Mammary epithelial cell (primary cell): ENCODE measurements at regions of chr18 and their contacts with region 1.

Region 1: GRCh38 chr18:7789856-7790552 is 222.9 kb downstream of the PTPRM start:
- DNase-seq: peak; percentile 37
- H3K4me3 ChIP-seq: no peak overlapping the region
- H3K27ac ChIP-seq: no peak overlapping the region
- H3K4me1 ChIP-seq: no peaks in the 10 kb centered on the region
- H3K27me3 ChIP-seq: no peaks in the 10 kb centered on the region
- CTCF ChIP-seq: peak; percentile 50 to 68

Region 2: GRCh38 chr18:7720395-7720794 is 69.6 kb before region 1 on chr18:
- CTCF ChIA-PET with region 1: no interaction called
- dilution Hi-C with region 1: no loop called
- in situ Hi-C with region 1: no loop called
- intact Hi-C with region 1: no loop called
- DNase-seq: no peak
- H3K4me3 ChIP-seq: no peak overlapping the region
- H3K27ac ChIP-seq: no peak overlapping the region
- H3K4me1 ChIP-seq: no peaks in the 10 kb centered on the region
- H3K27me3 ChIP-seq: no peaks in the 10 kb centered on the region
- CTCF ChIP-seq: no peak

Region 3: DNA sequence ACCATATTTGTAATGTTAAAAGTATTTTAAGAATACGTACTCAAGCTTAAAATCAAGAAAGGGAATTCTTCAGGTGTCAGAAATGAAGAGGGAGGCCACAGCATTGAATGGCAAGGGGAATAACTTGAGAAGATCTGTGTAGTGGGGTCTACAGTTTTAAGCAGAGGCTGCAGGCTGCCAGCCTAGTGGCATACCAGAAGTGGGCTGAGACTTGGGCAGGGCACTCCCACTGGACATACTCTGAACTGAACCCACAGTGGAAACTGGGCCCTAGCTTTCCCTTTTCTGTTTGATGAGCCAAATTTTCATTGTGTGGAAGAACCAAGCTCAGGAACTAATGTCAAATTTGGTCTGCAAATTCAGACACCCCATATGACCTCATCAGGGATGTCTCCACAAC is 15.9 kb after region 1 on chr18:
- CTCF ChIA-PET with region 1: no interaction called
- dilution Hi-C with region 1: no loop called
- in situ Hi-C with region 1: no loop called
- intact Hi-C with region 1: no loop called
- DNase-seq: no peak
- H3K4me3 ChIP-seq: no peak overlapping the region
- H3K27ac ChIP-seq: no peak overlapping the region
- H3K4me1 ChIP-seq: no peaks in the 10 kb centered on the region
- H3K27me3 ChIP-seq: no peaks in the 10 kb centered on the region
- CTCF ChIP-seq: no peak

Region 4: GRCh38 chr18:7872569-7872968 is 82.6 kb after region 1 on chr18:
- CTCF ChIA-PET with region 1: no interaction called
- dilution Hi-C with region 1: no loop called
- in situ Hi-C with region 1: no loop called
- intact Hi-C with region 1: loop called (anchors 2 kb)
- DNase-seq: peak; percentile 67
- H3K4me3 ChIP-seq: no peak overlapping the region
- H3K27ac ChIP-seq: peak overlapping the region; percentile 91
- H3K4me1 ChIP-seq: peaks cover 26% of the 10 kb centered on the region
- H3K27me3 ChIP-seq: no peaks in the 10 kb centered on the region
- CTCF ChIP-seq: peak; percentile 31 to 60

Region 5: GRCh38 chr18:7885865-7886264 is 95.9 kb after region 1 on chr18:
- CTCF ChIA-PET with region 1: no interaction called
- dilution Hi-C with region 1: no loop called
- in situ Hi-C with region 1: no loop called
- intact Hi-C with region 1: no loop called
- DNase-seq: no peak
- H3K4me3 ChIP-seq: no peak overlapping the region
- H3K27ac ChIP-seq: no peak overlapping the region
- H3K4me1 ChIP-seq: no peaks in the 10 kb centered on the region
- H3K27me3 ChIP-seq: no peaks in the 10 kb centered on the region
- CTCF ChIP-seq: no peak

Region 6: DNA sequence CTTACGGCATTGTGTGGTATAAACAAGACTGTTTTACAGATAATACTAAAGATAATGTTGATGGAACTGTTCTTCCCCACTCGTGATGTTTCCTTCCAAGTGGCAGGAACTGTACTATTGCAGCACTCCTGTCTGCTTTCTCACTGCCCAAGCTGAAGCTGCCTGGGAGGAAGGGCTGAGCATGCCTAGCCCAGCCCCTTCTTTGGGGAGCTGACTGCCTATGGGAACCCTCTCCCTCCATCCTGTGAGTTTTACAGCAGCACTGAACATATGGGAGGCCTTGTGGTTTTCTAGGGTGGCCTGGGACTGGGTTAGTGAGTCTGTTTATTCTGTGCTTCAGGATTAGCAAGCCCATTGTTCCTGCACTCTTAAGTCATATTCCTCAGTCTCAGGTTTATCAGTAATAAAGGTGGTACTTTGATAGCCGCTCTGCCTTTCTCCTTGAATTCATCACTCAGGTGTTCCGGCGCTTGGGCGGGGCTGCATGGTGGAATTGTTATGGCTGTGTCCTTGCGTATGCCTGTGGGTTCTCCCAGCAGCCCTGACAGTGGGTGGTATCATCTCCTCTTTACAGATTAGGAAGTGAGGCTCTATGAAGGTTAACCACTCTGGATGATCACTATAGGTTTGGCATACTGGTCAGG is 156.9 kb after region 1 on chr18:
- CTCF ChIA-PET with region 1: interaction called, 3 read pairs
- dilution Hi-C with region 1: no loop called
- in situ Hi-C with region 1: loop called in 1 of 2 experiments (anchors 25 kb)
- intact Hi-C with region 1: no loop called
- DNase-seq: peak; percentile 71
- H3K4me3 ChIP-seq: peak overlapping the region; percentile 31 to 57 (median 34)
- H3K27ac ChIP-seq: peak overlapping the region; percentile 88
- H3K4me1 ChIP-seq: peaks cover 36% of the 10 kb centered on the region
- H3K27me3 ChIP-seq: no peaks in the 10 kb centered on the region
- CTCF ChIP-seq: no peak

Region 7: GRCh38 chr18:8478166-8478967 is 688.4 kb after region 1 on chr18:
- CTCF ChIA-PET with region 1: no interaction called
- dilution Hi-C with region 1: no loop called
- in situ Hi-C with region 1: no loop called
- intact Hi-C with region 1: loop called (anchors 5 kb)
- DNase-seq: peak; percentile 29
- H3K4me3 ChIP-seq: no peak overlapping the region
- H3K27ac ChIP-seq: no peak overlapping the region
- H3K4me1 ChIP-seq: no peaks in the 10 kb centered on the region
- H3K27me3 ChIP-seq: no peaks in the 10 kb centered on the region
- CTCF ChIP-seq: peak; percentile 94 to 95